IMR-90 (cell line): ENCODE measurements at regions of chr4 and their contacts with region 1.

Region 1: GRCh38 chr4:94595879-94596483 is 144.2 kb downstream of the PDLIM5 start:
- DNase-seq: peak; percentile 74
- ATAC-seq: peak; percentile 79; the same call in 1 of the 2 replicates
- H3K4me3 ChIP-seq: no peak overlapping the region
- H3K27ac ChIP-seq: no peak overlapping the region
- H3K4me1 ChIP-seq: no peaks in the 10 kb centered on the region
- H3K27me3 ChIP-seq: no peaks in the 10 kb centered on the region
- CTCF ChIP-seq: peak; percentile 74
- POLR2A ChIP-seq: no peak
- RAD21 ChIP-seq: peak; percentile 87

Region 2: GRCh38 chr4:93814722-93815121 is 781.3 kb before region 1 on chr4:
- CTCF ChIA-PET with region 1: no interaction called
- POLR2A ChIA-PET with region 1: no interaction called
- dilution Hi-C with region 1: no loop called
- in situ Hi-C with region 1: loop called (anchors 25 kb)
- intact Hi-C with region 1: no loop called
- DNase-seq: no peak
- ATAC-seq: no peak
- H3K4me3 ChIP-seq: no peak overlapping the region
- H3K27ac ChIP-seq: no peak overlapping the region
- H3K4me1 ChIP-seq: no peaks in the 10 kb centered on the region
- H3K27me3 ChIP-seq: no peaks in the 10 kb centered on the region
- CTCF ChIP-seq: no peak
- POLR2A ChIP-seq: no peak
- RAD21 ChIP-seq: no peak

Region 3: DNA sequence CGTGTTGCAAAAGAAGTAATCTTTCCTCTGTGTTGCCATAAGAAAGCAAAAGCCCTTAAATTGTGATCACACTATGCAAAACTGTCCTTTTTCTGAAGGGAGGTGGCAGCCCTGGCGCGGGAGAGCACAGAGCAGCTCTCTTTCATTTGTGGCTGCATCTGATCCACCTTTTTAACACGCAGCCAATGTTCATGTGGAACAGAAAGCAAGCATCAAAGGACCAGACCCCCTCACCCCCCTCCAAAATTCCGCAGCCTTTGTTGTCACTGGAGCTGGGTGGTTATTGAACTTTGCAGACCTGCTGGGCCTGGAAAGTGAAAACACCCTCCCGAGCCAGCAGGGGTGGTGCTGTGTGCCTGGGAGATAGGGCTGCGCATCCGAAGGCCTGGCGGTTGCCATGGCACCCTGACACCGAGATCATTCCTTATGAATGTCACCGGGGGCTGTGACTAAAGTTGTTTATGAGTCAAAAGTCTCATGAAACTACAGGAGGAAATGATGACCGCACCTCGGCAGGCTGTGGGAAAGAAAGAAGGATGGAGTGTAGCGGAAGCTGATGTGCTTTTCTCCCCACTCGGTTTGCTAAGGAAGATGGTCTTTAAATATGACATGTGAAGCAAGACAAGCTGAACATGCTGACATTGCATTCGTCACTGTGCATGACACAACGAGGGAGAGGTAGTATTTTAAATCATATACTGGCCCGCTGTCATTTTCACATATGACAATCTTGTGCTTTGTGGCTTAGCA is 585.4 kb after region 1 on chr4:
- CTCF ChIA-PET with region 1: no interaction called
- POLR2A ChIA-PET with region 1: no interaction called
- dilution Hi-C with region 1: no loop called
- in situ Hi-C with region 1: no loop called
- intact Hi-C with region 1: no loop called
- DNase-seq: peak; percentile 2
- ATAC-seq: no peak
- H3K4me3 ChIP-seq: no peak overlapping the region
- H3K27ac ChIP-seq: no peak overlapping the region
- H3K4me1 ChIP-seq: no peaks in the 10 kb centered on the region
- H3K27me3 ChIP-seq: no peaks in the 10 kb centered on the region
- CTCF ChIP-seq: no peak
- POLR2A ChIP-seq: no peak
- RAD21 ChIP-seq: 0 out of 2 replicates have a peak, but pooled peaks have one; percentile 3